Endothelial cell of umbilical vein (primary cell): ENCODE measurements at regions of chr11 and their contacts with region 1.

Region 1: GRCh38 chr11:122468965-122469364 is 186.6 kb upstream of the UBASH3B start:
- DNase-seq: no peak
- H3K4me3 ChIP-seq: no peak overlapping the region
- H3K27ac ChIP-seq: no peak overlapping the region
- H3K4me1 ChIP-seq: no peaks in the 10 kb centered on the region
- H3K27me3 ChIP-seq: no peaks in the 10 kb centered on the region
- CTCF ChIP-seq: no peak
- POLR2A ChIP-seq: no peak

Region 2: DNA sequence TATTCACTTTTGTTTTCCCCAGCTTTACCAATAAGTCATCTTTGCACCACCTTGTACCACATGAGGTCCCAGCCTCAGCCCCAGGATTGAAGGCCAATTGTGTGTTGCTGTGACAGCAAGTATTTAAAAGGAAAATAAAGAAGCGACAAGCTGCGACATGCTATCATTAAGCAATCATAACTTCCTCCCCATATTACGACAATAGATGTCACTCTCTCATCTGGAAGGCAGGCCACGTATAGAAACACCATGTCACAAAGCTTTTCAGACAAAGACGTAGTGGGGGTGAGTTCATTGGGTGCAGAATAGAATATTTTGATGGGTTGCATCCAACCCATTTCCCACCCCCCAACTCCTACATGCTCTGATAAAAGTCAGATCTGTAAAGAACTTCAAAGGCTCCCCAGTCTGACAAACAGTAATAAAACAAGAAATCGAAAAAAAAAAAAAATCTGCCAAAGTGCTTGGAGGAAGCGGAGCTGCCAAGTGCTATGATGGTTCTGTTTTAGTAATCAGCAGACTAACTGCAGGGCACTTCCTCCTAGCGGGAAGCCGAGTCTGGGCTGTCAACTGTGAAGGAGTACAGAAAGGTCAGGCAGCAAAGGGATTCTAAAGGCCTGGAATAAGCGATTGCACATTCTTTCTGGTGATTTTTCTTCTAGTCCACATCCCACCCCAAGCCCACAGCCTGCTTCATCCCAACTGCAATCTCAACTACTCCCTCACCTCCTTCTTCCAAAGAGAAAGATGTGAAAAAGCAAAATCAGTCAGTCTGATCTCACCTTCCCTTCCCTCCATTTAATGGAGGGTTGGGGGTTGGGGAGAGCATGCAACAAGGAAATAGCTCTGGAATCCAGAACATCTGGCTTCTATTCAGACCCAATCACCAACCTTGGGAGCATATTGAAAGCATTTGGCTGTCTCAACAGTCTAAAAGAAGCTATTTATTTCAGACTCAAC is 55.2 kb after region 1 on chr11:
- CTCF ChIA-PET with region 1: no interaction called
- POLR2A ChIA-PET with region 1: no interaction called
- dilution Hi-C with region 1: no loop called
- intact Hi-C with region 1: loop called (anchors 2 kb)
- DNase-seq: no peak
- H3K4me3 ChIP-seq: no peak overlapping the region
- H3K27ac ChIP-seq: no peak overlapping the region
- H3K4me1 ChIP-seq: no peaks in the 10 kb centered on the region
- H3K27me3 ChIP-seq: peaks cover 2 to 4% of the 10 kb centered on the region in 2 experiments
- CTCF ChIP-seq: no peak
- POLR2A ChIP-seq: no peak